HAP-1 (cell line): ENCODE measurements at regions of chr3 and their contacts with region 1.

Region 1: DNA sequence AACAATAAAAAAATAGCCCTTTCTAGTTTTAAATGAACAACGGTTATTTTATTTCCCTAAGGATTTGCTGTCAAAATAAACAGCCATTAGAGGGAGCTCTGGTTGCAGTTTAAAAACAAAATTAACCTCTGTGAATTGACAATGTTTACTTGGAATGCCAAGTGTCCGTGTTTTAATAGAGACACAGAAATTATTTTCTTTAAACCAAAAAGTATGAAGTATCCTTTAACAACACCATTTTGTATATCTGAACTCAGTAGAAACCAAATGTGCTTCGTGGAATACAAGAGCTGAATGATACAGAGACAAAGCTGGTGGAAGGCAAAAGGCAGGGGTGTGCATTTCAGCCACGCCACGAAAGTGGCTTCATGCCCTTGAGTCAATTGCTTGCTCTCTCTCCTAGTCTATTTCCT is 74.4 kb downstream of the MOBP start:
- DNase-seq: peak; percentile 14 to 53
- H3K4me3 ChIP-seq: no peak overlapping the region
- H3K4me1 ChIP-seq: no peaks in the 10 kb centered on the region
- H3K27me3 ChIP-seq: no peaks in the 10 kb centered on the region

Region 2: GRCh38 chr3:39990532-39990931 is 448.6 kb after region 1 on chr3:
- in situ Hi-C with region 1: loop called (anchors 25 kb)
- DNase-seq: peak; percentile 42 to 65
- H3K4me3 ChIP-seq: no peak overlapping the region
- H3K4me1 ChIP-seq: no peaks in the 10 kb centered on the region
- H3K27me3 ChIP-seq: no peaks in the 10 kb centered on the region

Region 3: DNA sequence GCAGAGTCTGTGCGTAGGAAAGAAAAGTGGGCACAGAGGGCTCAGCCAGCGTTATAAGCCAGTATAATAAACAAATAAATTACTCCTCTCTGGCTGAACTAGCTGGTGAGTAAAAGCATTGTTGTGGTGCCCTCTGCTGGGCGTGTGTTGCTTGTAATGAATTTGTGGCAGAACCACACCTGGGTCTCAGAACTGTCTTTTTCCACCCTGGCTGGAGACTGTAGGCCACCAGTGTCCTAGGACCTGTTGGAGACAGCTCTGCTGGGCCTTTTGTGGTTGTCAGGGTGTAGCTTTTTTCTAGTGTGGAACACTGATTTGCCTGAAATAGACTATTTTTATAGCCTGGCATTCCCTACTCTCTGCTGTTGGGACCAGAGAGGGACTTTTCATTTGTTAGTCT is 637.1 kb after region 1 on chr3:
- in situ Hi-C with region 1: loop called (anchors 25 kb)
- DNase-seq: peak; percentile 61 to 88
- H3K4me3 ChIP-seq: no peak overlapping the region
- H3K4me1 ChIP-seq: peaks cover 9% of the 10 kb centered on the region
- H3K27me3 ChIP-seq: no peaks in the 10 kb centered on the region

Region 4: GRCh38 chr3:40309418-40309924 is 767.5 kb after region 1 on chr3 and contains the start of gene EIF1B:
- in situ Hi-C with region 1: loop called (anchors 25 kb)
- DNase-seq: peak; percentile 94 to 98
- H3K4me3 ChIP-seq: peak within 1 kb of the TSS; percentile 92
- H3K4me1 ChIP-seq: peaks cover 16% of the 10 kb centered on the region
- H3K27me3 ChIP-seq: no peaks in the 10 kb centered on the region